Heart right ventricle (tissue), 16 donors: ENCODE measurements at regions of chr11 and their contacts with region 1.

Region 1: DNA sequence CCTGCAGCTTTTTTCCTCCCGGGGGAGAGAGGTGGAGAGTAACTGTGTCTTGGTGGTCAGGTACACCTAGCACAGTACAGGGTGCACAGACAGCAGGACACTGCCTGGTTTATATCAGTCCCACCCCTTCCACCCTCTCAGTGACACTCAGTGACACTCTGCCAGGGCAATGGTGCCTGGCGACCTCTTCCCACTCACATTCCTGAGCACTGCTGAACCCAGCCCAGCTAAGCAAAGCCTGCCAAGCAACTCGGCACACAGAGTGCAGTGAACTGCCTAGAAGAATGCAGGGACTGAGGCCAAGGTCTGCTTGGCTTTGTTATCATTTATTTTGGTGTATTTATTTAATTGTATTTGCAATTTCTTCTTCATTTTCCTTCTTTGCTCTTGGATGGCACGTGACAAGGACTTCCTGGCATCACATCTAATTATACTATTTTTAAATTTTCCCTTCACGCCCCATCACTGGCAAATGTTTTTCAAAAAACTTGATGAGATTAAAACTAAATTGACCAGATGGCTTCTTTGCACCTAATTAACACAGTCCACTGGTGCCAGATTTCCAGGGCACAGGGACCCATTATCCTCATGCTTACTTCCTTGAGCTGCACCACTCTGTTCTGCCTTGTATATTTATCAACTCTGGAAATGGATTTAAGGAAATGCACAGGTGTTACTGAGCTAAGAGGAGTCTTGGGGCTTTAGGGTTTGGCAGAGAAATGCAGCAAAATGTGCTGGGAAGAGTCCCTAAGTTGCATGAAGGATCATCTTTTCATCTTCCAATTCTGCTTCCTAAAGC is 205.6 kb downstream of the ADAMTS15 start:
- DNase-seq: peak; percentile 84 to 85
- ATAC-seq: peak; percentile 94 to 98 (median 96)
- H3K4me3 ChIP-seq: no peak overlapping the region
- H3K27ac ChIP-seq: peak overlapping the region; percentile 1 to 75 (median 68)
- H3K4me1 ChIP-seq: peaks cover 7 to 50% (median 34%) of the 10 kb centered on the region in 9 donors
- H3K27me3 ChIP-seq: no peaks in the 10 kb centered on the region
- CTCF ChIP-seq: no peak

Region 2: GRCh38 chr11:130527636-130528297 is 126.3 kb before region 1 on chr11:
- intact Hi-C with region 1: loop called in 3 of 10 experiments (anchors 5 to 10 kb)
- DNase-seq: peak; percentile 31 to 55
- ATAC-seq: peak; percentile 40 to 78 (median 69)
- H3K4me3 ChIP-seq: no peak overlapping the region
- H3K27ac ChIP-seq: peak overlapping the region in 8 of 10 donors; percentile 36 to 76 (median 51)
- H3K4me1 ChIP-seq: peaks cover 27 to 45% (median 36%) of the 10 kb centered on the region in 9 donors
- H3K27me3 ChIP-seq: no peaks in the 10 kb centered on the region
- CTCF ChIP-seq: no peak

Region 3: GRCh38 chr11:130609121-130610035 is 44.7 kb before region 1 on chr11:
- intact Hi-C with region 1: loop called in 1 of 10 experiments (anchors 5 kb)
- DNase-seq: peak; percentile 79 to 84
- ATAC-seq: peak; percentile 81 to 89 (median 86)
- H3K4me3 ChIP-seq: no peak overlapping the region
- H3K27ac ChIP-seq: peak overlapping the region; percentile 61 to 87 (median 80)
- H3K4me1 ChIP-seq: peaks cover 4 to 65% (median 47%) of the 10 kb centered on the region in 9 donors
- H3K27me3 ChIP-seq: no peaks in the 10 kb centered on the region
- CTCF ChIP-seq: no peak

Region 4: GRCh38 chr11:130671801-130672700 is 18.0 kb after region 1 on chr11:
- intact Hi-C with region 1: loop called in 2 of 10 experiments (anchors 2 kb)
- DNase-seq: peak; percentile 59 to 83
- ATAC-seq: peak; percentile 56 to 85 (median 74)
- H3K4me3 ChIP-seq: no peak overlapping the region
- H3K27ac ChIP-seq: peak overlapping the region in 8 of 10 donors; percentile 15 to 57 (median 49)
- H3K4me1 ChIP-seq: peaks cover 8 to 49% (median 43%) of the 10 kb centered on the region in 9 donors
- H3K27me3 ChIP-seq: no peaks in the 10 kb centered on the region
- CTCF ChIP-seq: no peak

Region 5: DNA sequence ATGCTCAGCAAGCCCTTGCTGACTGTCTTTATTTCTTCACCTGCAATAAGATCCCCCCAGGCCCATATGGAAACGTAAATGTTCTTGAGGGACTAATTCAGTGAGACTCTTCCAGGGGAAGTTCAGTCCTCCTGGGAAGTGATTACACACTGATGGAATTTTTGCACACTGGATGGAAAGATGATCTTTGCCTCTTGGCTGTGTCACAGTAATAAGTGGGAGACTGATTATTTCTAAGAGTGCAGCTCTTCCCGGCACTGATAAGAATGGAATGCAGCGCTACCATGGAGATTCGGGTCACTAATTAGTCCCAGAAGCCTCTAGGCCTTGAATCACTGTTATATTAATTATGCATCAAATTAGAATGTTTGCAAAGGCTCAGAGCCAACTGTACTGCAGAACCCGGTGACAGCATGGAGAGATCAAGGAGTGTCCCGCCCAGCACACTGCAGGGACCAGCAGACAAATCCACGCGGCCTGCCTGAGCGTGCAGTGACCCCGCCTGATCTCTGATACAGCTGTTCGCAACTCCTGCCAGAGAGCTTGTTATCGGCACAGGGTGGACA is 83.9 kb after region 1 on chr11:
- intact Hi-C with region 1: loop called in 1 of 10 experiments (anchors 5 kb)
- DNase-seq: peak; percentile 72 to 74
- ATAC-seq: peak; percentile 93 to 97 (median 96)
- H3K4me3 ChIP-seq: no peak overlapping the region
- H3K27ac ChIP-seq: peak overlapping the region; percentile 13 to 68 (median 58)
- H3K4me1 ChIP-seq: peaks cover 0 to 23% (median 21%) of the 10 kb centered on the region in 9 donors
- H3K27me3 ChIP-seq: no peaks in the 10 kb centered on the region
- CTCF ChIP-seq: no peak

Region 6: GRCh38 chr11:130782361-130783221 is 128.6 kb after region 1 on chr11:
- intact Hi-C with region 1: no loop called
- DNase-seq: no peak
- ATAC-seq: peak; percentile 35 to 65 (median 52)
- H3K4me3 ChIP-seq: no peak overlapping the region
- H3K27ac ChIP-seq: peak overlapping the region in 9 of 10 donors; percentile 9 to 76 (median 67)
- H3K4me1 ChIP-seq: peaks cover 7 to 37% (median 25%) of the 10 kb centered on the region in 9 donors
- H3K27me3 ChIP-seq: no peaks in the 10 kb centered on the region
- CTCF ChIP-seq: no peak